GM12878 (cell line): ENCODE measurements at regions of chr22 and their contacts with region 1.

Region 1: GRCh38 chr22:17201285-17201945 is 17.8 kb downstream of the ADA2 start:
- DNase-seq: no peak
- ATAC-seq: no peak
- H3K4me3 ChIP-seq: no peak overlapping the region
- H3K27ac ChIP-seq: no peak overlapping the region
- H3K4me1 ChIP-seq: no peaks in the 10 kb centered on the region
- H3K27me3 ChIP-seq: no peaks in the 10 kb centered on the region
- CTCF ChIP-seq: no peak
- EP300 ChIP-seq: no peak
- POLR2A ChIP-seq: no peak
- RAD21 ChIP-seq: no peak

Region 2: GRCh38 chr22:17250380-17251090 is 49.1 kb after region 1 on chr22:
- CTCF ChIA-PET with region 1: interaction called, 10 read pairs
- POLR2A ChIA-PET with region 1: interaction called, 3 read pairs
- RAD21 ChIA-PET with region 1: interaction called, 3 read pairs
- SMC1A ChIA-PET with region 1: no interaction called
- in situ Hi-C with region 1: no loop called
- intact Hi-C with region 1: no loop called
- DNase-seq: no peak
- ATAC-seq: peak; percentile 51
- H3K4me3 ChIP-seq: no peak overlapping the region
- H3K27ac ChIP-seq: no peak overlapping the region
- H3K4me1 ChIP-seq: no peaks in the 10 kb centered on the region
- H3K27me3 ChIP-seq: no peaks in the 10 kb centered on the region
- CTCF ChIP-seq: peak in 1 of 3 experiments; percentile 17; a peak in 1 of 6 replicates
- EP300 ChIP-seq: no peak
- POLR2A ChIP-seq: no peak
- RAD21 ChIP-seq: no peak